Psoas muscle (tissue), 8 donors: ENCODE measurements at regions of chr16 and their contacts with region 1.

Region 1: GRCh38 chr16:84511180-84511824 is 6.8 kb upstream of the MEAK7 start:
- DNase-seq: peak; percentile 82 to 91
- ATAC-seq: peak; percentile 73 to 89 (median 79)
- H3K4me3 ChIP-seq: no peak overlapping the region
- H3K27ac ChIP-seq: no peak overlapping the region
- H3K4me1 ChIP-seq: peaks cover 1% of the 10 kb centered on the region
- H3K27me3 ChIP-seq: no peaks in the 10 kb centered on the region
- CTCF ChIP-seq: peak; percentile 98

Region 2: DNA sequence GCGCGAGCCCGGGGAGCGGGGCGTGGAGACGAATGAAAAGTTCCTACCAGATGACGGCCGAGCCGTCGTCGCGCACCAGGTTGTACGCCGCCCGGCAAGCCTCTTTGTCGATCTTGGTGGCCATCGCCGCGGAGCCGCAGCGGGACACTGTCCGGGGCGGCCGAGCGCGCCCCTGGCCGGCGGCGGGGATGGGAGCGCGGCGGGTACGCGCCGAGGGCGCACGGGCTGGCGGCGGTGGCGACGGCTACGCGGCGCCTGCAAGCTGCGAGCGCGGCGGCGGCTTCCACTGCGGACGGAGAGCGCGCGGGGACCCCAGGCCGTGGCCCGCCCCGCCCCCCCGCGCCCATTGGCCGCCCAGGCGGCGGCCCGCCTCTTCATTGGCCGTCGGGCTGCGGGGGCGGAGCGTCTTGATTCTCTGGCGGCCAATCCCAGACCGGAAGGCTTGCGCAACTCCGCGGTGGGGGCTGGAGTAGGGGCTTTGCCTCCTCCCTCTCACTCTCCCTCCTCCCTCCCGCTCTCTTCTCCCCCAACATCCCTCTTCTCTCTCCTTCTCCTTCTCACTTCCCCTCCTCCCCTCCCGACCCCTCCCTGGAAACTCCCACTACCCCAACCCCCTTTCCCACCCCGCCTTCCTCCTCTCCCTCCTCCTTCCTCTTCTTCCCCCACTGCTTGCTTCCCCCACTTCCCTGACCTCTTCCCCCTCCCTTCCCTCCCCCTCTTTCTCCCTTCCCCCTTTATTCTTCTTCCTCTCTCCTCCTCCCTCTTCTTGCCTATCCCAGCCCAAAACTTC is 106.7 kb after region 1 on chr16 and contains the start of gene COTL1:
- intact Hi-C with region 1: loop called (anchors 1 to 5 kb)
- DNase-seq: peak; percentile 97 to 98
- ATAC-seq: peak; percentile 84 to 93 (median 91)
- H3K4me3 ChIP-seq: peak within 1 kb of the TSS; percentile 69
- H3K27ac ChIP-seq: no peak within 1 kb of the TSS
- H3K4me1 ChIP-seq: peaks cover 10% of the 10 kb centered on the region
- H3K27me3 ChIP-seq: peaks cover 0 to 33% (median 2%) of the 10 kb centered on the region in 3 donors
- CTCF ChIP-seq: no peak
- total RNA-seq, gene COTL1: 7.0 to 11.9 (median 10.4) TPM

Region 3: GRCh38 chr16:84726079-84726668 is 214.9 kb after region 1 on chr16:
- intact Hi-C with region 1: loop called in 1 of 2 experiments (anchors 2 kb)
- DNase-seq: peak; percentile 92 to 94
- ATAC-seq: peak; percentile 76 to 87 (median 78)
- H3K4me3 ChIP-seq: no peak overlapping the region
- H3K27ac ChIP-seq: peak overlapping the region; percentile 34
- H3K4me1 ChIP-seq: peaks cover 62% of the 10 kb centered on the region
- H3K27me3 ChIP-seq: no peaks in the 10 kb centered on the region
- CTCF ChIP-seq: peak; percentile 96

Region 4: GRCh38 chr16:84738255-84739038 is 227.1 kb after region 1 on chr16:
- intact Hi-C with region 1: loop called in 1 of 2 experiments (anchors 5 kb)
- DNase-seq: peak; percentile 66 to 79
- ATAC-seq: peak; percentile 74 to 80 (median 74)
- H3K4me3 ChIP-seq: no peak overlapping the region
- H3K27ac ChIP-seq: no peak overlapping the region
- H3K4me1 ChIP-seq: peaks cover 35% of the 10 kb centered on the region
- H3K27me3 ChIP-seq: no peaks in the 10 kb centered on the region
- CTCF ChIP-seq: peak; percentile 87

Region 5: GRCh38 chr16:84952335-84953189 is 441.3 kb after region 1 on chr16:
- intact Hi-C with region 1: no loop called
- DNase-seq: peak; percentile 66 to 75
- ATAC-seq: peak; percentile 93 to 98 (median 97)
- H3K4me3 ChIP-seq: no peak overlapping the region
- H3K27ac ChIP-seq: no peak overlapping the region
- H3K4me1 ChIP-seq: peaks cover 6% of the 10 kb centered on the region
- H3K27me3 ChIP-seq: no peaks in the 10 kb centered on the region
- CTCF ChIP-seq: peak; percentile 95